ENCODE measurements at regions of chr9 and their contacts with region 1.

Region 1: DNA sequence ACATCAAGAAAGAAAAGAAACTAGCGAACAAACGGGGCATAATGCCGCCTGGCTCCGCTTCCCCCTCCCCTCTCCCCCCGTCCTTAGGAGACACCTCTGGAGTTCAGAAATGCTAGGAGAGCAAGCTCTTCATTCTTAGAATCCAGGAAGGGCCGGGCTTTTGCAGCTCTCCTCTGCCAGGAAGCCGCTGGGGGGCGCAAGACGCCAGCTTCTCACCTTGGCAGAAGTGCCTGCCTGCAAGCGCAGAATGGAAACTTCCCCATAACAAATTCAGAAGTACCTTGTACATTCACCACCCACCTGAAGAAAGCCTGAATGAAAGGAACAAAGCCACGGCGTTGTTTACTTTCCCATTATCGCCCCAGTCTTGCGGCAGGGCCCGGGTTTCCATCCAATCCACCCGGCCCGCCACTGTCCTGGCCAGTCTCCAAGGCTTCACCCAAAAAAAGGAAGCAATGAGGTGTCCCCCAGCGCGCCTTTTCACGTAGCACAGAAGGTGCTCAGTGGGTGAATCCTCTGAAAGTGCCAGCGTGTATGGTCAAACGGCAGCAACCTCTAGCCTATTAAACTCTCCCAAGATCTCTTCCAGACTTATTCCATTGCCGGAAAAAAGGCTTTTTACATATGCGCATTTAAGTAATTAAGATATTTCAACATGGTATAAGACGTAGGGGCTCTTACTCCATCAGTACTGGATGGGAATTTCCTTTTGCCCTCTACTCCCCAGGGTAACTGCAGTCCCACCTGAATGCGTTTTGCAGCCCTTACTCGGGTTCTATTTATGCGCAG is 1.6 kb upstream of the GADD45G start:
- DNase-seq: peak; percentile 88 to 91
- ATAC-seq: peak; percentile 19 to 65 (median 43)
- H3K4me3 ChIP-seq: peak overlapping the region in 9 of 10 donors; percentile 75 to 90 (median 85)
- H3K27ac ChIP-seq: peak overlapping the region in 8 of 10 donors; percentile 50 to 97 (median 92)
- H3K4me1 ChIP-seq: peaks cover 3 to 48% (median 43%) of the 10 kb centered on the region in 9 donors
- H3K27me3 ChIP-seq: peaks cover 0 to 13% (median 0%) of the 10 kb centered on the region in 7 donors
- CTCF ChIP-seq: peak; percentile 74 to 91 (median 86)

Region 2: GRCh38 chr9:89309608-89310474 is 293.3 kb before region 1 on chr9:
- intact Hi-C with region 1: no loop called
- DNase-seq: peak in 1 of 2 donors; percentile 13
- ATAC-seq: no peak
- H3K4me3 ChIP-seq: peak overlapping the region; percentile 69 to 93 (median 80)
- H3K27ac ChIP-seq: peak overlapping the region; percentile 97 to 100 (median 100)
- H3K4me1 ChIP-seq: peaks cover 0 to 44% (median 21%) of the 10 kb centered on the region in 9 donors
- H3K27me3 ChIP-seq: no peaks in the 10 kb centered on the region
- CTCF ChIP-seq: no peak

Region 3: GRCh38 chr9:89661956-89662717 is 59.0 kb after region 1 on chr9:
- intact Hi-C with region 1: loop called in 2 of 10 experiments (anchors 2 to 5 kb)
- DNase-seq: peak; percentile 98 to 99
- ATAC-seq: peak; percentile 94 to 99 (median 97)
- H3K4me3 ChIP-seq: peak overlapping the region in 9 of 10 donors; percentile 23 to 51 (median 47)
- H3K27ac ChIP-seq: peak overlapping the region; percentile 50 to 88 (median 82)
- H3K4me1 ChIP-seq: peaks cover 4 to 57% (median 22%) of the 10 kb centered on the region in 9 donors
- H3K27me3 ChIP-seq: no peaks in the 10 kb centered on the region
- CTCF ChIP-seq: no peak

Region 4: GRCh38 chr9:89750147-89750861 is 147.1 kb after region 1 on chr9:
- intact Hi-C with region 1: loop called in 3 of 10 experiments (anchors 5 to 10 kb)
- DNase-seq: peak; percentile 56 to 63
- ATAC-seq: peak; percentile 62 to 80 (median 74)
- H3K4me3 ChIP-seq: no peak overlapping the region
- H3K27ac ChIP-seq: no peak overlapping the region
- H3K4me1 ChIP-seq: peaks cover 0 to 36% (median 12%) of the 10 kb centered on the region in 9 donors
- H3K27me3 ChIP-seq: no peaks in the 10 kb centered on the region
- CTCF ChIP-seq: no peak

Region 5: GRCh38 chr9:89878687-89879086 is 275.5 kb after region 1 on chr9:
- intact Hi-C with region 1: loop called in 5 of 10 experiments (anchors 5 to 10 kb)
- DNase-seq: peak; percentile 80
- ATAC-seq: peak; percentile 59 to 92 (median 86)
- H3K4me3 ChIP-seq: no peak overlapping the region
- H3K27ac ChIP-seq: peak overlapping the region; percentile 64 to 89 (median 80)
- H3K4me1 ChIP-seq: peaks cover 11 to 61% (median 46%) of the 10 kb centered on the region in 9 donors
- H3K27me3 ChIP-seq: no peaks in the 10 kb centered on the region
- CTCF ChIP-seq: no peak

Region 6: DNA sequence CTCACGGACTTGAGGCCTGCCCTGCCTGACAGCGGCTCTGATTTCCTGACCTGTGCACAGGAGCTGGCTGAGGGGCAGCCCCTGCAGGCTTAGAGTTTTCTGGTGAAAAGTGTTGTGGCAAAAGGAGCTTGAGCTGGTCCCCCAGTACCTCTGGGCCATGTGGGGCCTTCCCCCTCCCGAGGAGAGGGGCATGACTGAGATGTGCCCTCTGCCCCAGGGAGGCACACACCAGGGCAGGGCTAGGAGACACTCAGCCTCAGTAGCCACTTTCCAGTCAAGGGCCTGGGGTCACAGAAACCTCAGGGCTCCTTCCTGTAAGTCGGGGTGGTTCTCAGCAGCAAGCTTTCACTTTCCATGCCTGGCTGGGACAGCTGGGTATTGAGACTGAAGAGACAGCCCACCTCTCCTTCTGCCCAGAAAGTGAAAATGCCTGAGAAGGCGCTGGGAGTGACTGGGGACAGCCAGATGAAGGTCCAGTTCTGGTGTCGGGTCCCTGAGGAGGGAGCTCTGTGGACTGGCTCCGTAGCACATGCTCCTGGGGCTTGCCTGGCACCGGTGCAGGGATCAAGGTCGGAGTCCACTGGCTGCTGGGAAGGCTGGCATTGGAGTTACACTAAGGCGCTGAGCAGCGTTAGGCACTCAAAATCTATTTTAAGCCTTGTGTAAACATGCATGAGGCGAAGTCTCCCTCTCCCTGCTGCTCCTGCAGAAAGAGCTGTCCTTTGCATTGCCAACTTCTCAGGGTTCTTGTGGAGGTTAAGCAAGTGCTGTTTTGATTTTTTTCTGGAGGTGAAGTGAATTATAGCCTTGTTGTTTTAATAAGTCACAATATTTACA is 396.6 kb after region 1 on chr9:
- intact Hi-C with region 1: loop called in 6 of 10 experiments (anchors 2 to 5 kb)
- DNase-seq: peak; percentile 76 to 81
- ATAC-seq: peak; percentile 82 to 95 (median 92)
- H3K4me3 ChIP-seq: peak overlapping the region in 9 of 10 donors; percentile 10 to 34 (median 17)
- H3K27ac ChIP-seq: peak overlapping the region; percentile 71 to 91 (median 88)
- H3K4me1 ChIP-seq: peaks cover 23 to 64% (median 50%) of the 10 kb centered on the region in 9 donors
- H3K27me3 ChIP-seq: no peaks in the 10 kb centered on the region
- CTCF ChIP-seq: peak in 2 of 9 donors; percentile 35 to 37

Region 7: DNA sequence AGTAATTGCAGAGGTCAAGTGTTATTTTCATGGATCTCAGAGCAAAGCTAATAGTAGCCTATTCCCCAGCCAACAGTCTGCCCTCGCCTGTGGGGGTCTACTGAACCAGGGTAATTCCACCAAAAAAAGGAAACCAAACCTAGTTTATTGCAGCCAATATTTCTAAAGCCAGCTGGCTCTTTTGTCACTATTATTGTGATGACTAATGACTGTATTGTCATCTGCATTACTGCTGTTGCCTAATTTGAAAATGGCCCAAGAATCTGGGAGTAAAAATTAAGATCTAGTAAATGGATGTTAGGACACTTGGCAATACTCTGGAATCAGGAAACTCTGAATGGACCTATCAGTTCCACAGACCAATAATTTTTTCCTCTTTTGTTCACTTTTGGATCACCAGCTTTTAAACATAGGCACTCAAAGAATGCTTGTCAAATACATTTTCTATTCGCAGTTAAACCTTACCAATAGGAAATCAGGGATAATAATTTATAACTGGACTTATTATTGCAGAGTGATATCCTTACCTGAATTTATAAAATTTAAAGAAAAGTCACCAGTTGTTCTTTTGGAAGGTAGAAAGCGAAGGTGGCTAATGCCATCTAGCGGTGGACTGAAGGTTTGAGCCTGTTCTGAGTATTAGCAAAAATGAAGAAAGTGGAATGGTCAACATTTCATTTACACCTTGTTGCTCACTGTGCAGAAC is 1267.6 kb after region 1 on chr9:
- intact Hi-C with region 1: loop called in 9 of 10 experiments (anchors 2 to 10 kb)
- DNase-seq: no peak
- ATAC-seq: peak in 1 of 8 donors; percentile 49
- H3K4me3 ChIP-seq: no peak overlapping the region
- H3K27ac ChIP-seq: no peak overlapping the region
- H3K4me1 ChIP-seq: peaks cover 0 to 13% (median 0%) of the 10 kb centered on the region in 9 donors
- H3K27me3 ChIP-seq: peaks cover 0 to 7% (median 0%) of the 10 kb centered on the region in 7 donors
- CTCF ChIP-seq: peak; percentile 72 to 95 (median 84)

Measured in heart right ventricle (tissue), 16 donors.